ENCODE measurements at regions of chr1 and their contacts with region 1.

Region 1: DNA sequence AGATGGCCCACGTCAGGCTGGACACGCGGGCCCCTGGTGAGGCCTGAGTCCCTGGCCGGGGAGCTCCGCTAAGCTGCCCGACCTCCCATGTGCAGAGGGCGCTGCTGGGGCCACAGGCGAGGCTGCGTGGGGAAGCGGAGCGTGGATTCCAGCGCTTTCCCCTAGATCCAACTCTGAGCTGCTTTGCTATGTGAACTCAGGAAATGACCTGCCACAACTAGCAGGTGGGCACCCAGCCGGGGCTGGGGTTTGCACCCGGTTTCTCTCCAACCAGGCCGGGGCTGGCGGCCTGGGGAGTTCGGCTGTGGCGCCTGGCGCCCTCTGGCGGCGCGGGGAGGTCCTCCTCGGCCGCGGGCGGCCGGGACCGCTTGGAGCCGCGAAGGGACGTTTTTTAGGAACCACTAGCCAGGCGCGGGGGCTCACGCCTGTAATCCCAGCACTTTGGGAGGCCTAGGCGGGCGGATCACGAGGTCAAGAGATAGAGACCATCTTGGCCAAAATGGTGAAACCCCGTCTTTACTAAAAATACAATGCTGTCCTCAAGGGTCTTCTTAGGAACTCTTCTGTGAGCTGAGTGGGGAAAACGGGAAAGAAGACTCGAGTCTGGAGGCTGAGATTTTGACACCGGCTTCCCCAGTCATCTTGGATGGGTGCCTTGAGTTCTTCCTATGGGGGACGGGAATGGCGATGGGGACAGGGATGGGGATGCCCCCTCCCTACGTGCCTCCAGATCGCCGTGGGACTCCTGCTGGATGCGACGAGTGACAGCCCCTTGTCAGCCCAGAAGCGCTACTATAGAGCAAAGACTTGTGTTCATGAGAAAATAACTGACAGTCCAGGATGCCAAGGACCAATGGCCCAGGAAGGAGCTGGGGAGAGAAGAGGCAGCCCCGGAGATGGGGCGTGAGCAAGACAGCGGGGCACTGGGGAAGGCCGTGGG is 12.6 kb downstream of the PYCR2 start:
- DNase-seq: peak; percentile 78
- ATAC-seq: peak; percentile 94
- H3K4me3 Mint-ChIP-seq: no peak overlapping the region
- H3K27ac Mint-ChIP-seq: no peak overlapping the region
- H3K4me1 Mint-ChIP-seq: peaks cover 17% of the 10 kb centered on the region
- H3K27me3 Mint-ChIP-seq: no peaks in the 10 kb centered on the region
- CTCF ChIP-seq: peak; percentile 93

Region 2: GRCh38 chr1:225480825-225481434 is 430.5 kb before region 1 on chr1:
- CTCF ChIA-PET with region 1: interaction called, 16 read pairs
- POLR2A ChIA-PET with region 1: no interaction called
- intact Hi-C with region 1: loop called (anchors 5 kb)
- DNase-seq: peak; percentile 76
- ATAC-seq: peak; percentile 80
- H3K4me3 Mint-ChIP-seq: no peak overlapping the region
- H3K27ac Mint-ChIP-seq: no peak overlapping the region
- H3K4me1 Mint-ChIP-seq: peaks cover 24% of the 10 kb centered on the region
- H3K27me3 Mint-ChIP-seq: no peaks in the 10 kb centered on the region
- CTCF ChIP-seq: peak; percentile 97

Region 3: DNA sequence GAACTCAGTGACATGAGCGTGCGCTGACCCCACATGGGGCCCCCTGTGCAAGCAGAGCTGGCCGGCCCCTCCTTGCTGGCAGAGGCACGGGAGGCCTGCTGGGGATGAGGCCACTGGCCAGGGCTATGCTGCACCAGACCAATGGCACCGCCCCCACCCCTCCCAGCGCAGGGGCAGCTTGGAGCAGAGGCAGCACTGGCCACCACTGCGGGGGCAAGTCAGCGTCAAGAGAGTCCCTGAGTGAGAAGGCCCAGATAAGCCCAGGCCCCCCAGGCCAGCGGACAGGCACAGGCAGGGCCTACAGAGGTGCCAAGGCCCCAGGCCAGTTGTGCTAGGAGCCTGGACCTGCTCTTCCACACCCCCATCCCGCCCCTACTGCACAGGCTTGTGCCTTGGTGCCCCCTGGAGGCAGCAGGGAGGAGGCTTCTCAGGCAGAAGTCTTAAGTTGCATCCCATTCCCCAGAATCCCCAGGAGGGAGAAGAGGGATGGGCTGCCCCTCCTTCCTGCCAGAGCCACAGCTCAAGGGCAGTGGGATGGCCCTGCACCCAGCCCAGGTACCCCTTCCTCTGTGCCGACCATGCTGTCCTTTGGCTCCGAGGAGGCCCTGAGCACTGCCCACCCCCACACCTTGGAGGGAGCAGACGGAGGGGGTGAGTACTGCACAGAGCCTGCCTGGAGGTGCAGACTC is 65.7 kb before region 1 on chr1:
- CTCF ChIA-PET with region 1: interaction called, 10 read pairs
- POLR2A ChIA-PET with region 1: no interaction called
- intact Hi-C with region 1: no loop called
- DNase-seq: peak; percentile 44
- ATAC-seq: no peak
- H3K4me3 Mint-ChIP-seq: no peak overlapping the region
- H3K27ac Mint-ChIP-seq: peak overlapping the region; percentile 40
- H3K4me1 Mint-ChIP-seq: peaks cover 46% of the 10 kb centered on the region
- H3K27me3 Mint-ChIP-seq: no peaks in the 10 kb centered on the region
- CTCF ChIP-seq: peak; percentile 40

Region 4: GRCh38 chr1:225881969-225882693 is 29.3 kb before region 1 on chr1 and contains the start of gene TMEM63A:
- CTCF ChIA-PET with region 1: interaction called, 32 read pairs
- POLR2A ChIA-PET with region 1: interaction called, 4 read pairs
- intact Hi-C with region 1: no loop called
- DNase-seq: peak; percentile 94
- ATAC-seq: peak; percentile 71
- H3K4me3 Mint-ChIP-seq: peak within 1 kb of the TSS; percentile 76
- H3K27ac Mint-ChIP-seq: peak within 1 kb of the TSS; percentile 88
- H3K4me1 Mint-ChIP-seq: peaks cover 51% of the 10 kb centered on the region
- H3K27me3 Mint-ChIP-seq: no peaks in the 10 kb centered on the region
- CTCF ChIP-seq: no peak
- total RNA-seq, gene TMEM63A: 51.4 to 54.6 TPM

Region 5: GRCh38 chr1:225896937-225897549 is 14.4 kb before region 1 on chr1:
- CTCF ChIA-PET with region 1: interaction called, 27 read pairs
- POLR2A ChIA-PET with region 1: no interaction called
- intact Hi-C with region 1: no loop called
- DNase-seq: peak; percentile 85
- ATAC-seq: peak; percentile 96
- H3K4me3 Mint-ChIP-seq: peak overlapping the region; percentile 57
- H3K27ac Mint-ChIP-seq: peak overlapping the region; percentile 91
- H3K4me1 Mint-ChIP-seq: peaks cover 38% of the 10 kb centered on the region
- H3K27me3 Mint-ChIP-seq: no peaks in the 10 kb centered on the region
- CTCF ChIP-seq: no peak